ENCODE measurements at regions of chr12 and their contacts with region 1.

Region 1: DNA sequence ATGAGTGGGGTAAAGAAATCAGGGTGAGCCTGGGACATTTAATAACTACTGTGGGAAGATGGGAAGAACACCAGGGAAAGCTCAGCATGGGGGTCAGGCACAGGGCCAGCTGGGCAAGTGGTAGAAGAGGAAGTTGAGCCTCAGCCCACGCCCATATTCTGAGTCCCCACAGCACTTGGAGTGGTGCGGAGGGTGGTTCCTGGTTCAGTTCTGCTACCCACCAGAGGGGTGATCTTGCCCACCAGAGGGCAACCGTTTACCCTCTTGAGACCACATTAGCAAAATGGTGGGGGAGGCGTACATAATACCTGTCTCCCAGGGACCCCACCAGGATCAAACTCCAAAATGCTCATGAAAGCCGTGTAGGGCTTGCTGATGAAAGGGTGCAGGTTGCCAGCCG is 16.8 kb upstream of the ANKRD33 start:
- DNase-seq: no peak
- H3K4me3 ChIP-seq: no peak overlapping the region
- H3K27ac ChIP-seq: no peak overlapping the region
- H3K4me1 ChIP-seq: peaks cover 4 to 30% (median 20%) of the 10 kb centered on the region in 4 experiments
- H3K27me3 ChIP-seq: peaks cover 0 to 29% (median 24%) of the 10 kb centered on the region in 4 experiments; a peak in 6 of 7 replicates
- CTCF ChIP-seq: peak in 2 of 3 experiments; percentile 6 to 31; a peak in 3 of 4 replicates
- EP300 ChIP-seq: no peak
- POLR2A ChIP-seq: no peak
- RAD21 ChIP-seq: peak in 1 of 2 experiments; percentile 9; a peak in 1 of 4 replicates

Region 2: DNA sequence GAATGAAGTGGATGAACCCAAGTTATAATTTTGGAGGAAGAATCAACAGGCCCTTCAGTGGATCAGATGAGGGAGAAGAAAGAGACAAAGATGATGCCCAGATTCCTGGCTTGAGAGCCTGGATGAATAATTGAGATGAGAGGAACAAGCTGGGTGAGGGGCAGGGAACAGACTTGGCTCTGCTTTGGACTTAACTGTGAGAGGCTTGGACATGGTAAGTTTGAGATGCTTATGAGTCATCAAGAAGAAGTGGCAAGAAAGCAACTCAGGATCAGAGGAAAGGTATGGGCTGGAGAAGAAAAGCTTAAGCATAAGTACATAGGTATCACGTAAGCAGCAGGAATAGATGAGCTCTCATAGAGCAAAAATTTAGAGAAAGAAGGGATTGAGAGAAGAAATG is 77.9 kb before region 1 on chr12:
- CTCF ChIA-PET with region 1: interaction called, 14 read pairs
- POLR2A ChIA-PET with region 1: no interaction called
- DNase-seq: no peak
- H3K4me3 ChIP-seq: no peak overlapping the region
- H3K27ac ChIP-seq: no peak overlapping the region
- H3K4me1 ChIP-seq: no peaks in the 10 kb centered on the region
- H3K27me3 ChIP-seq: no peaks in the 10 kb centered on the region
- CTCF ChIP-seq: no peak
- EP300 ChIP-seq: no peak
- POLR2A ChIP-seq: no peak
- RAD21 ChIP-seq: no peak

Region 3: DNA sequence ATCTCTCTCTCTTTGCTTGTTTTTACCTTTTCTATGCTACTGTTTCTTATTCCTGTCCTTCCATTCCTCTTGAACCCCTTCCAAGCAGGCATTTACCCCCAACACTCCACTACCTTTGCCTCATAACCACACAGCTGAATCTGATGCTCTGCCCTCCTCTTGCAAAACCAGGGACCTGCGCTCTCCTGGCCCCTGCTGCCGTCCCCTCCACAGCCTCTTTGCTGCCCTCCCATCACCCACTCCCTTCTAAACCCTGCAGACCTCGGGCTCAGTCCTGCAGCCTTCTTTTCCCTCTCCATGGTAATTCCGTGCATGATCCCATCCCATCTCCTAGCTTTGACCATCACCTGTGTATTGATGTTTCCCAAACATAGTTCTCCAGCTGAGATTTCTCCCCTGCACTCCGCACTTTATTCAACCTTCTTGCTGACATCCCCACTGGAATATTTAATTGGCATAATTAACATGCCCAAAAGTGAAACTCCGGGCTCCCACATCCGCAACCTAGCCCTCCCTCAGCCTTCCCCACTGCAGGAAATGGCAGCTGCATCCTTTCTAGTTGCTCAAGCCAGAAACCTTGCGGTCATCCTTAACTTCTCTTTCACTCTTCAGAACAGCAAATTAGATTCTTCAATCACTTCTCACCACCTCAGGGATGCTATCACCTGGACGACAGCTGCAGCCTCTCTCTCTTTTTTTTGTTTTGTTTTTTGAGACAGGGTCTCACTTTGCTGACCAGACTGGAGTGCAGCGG is 38.6 kb before region 1 on chr12:
- CTCF ChIA-PET with region 1: interaction called, 109 read pairs
- POLR2A ChIA-PET with region 1: interaction called, 3 read pairs
- DNase-seq: no peak
- H3K4me3 ChIP-seq: no peak overlapping the region
- H3K27ac ChIP-seq: no peak overlapping the region
- H3K4me1 ChIP-seq: peaks cover 19 to 58% (median 36%) of the 10 kb centered on the region in 4 experiments
- H3K27me3 ChIP-seq: peaks cover 0 to 3% (median 0%) of the 10 kb centered on the region in 4 experiments; a peak in 1 of 7 replicates
- CTCF ChIP-seq: no peak
- EP300 ChIP-seq: no peak
- POLR2A ChIP-seq: no peak
- RAD21 ChIP-seq: no peak

Region 4: GRCh38 chr12:51898937-51899336 is 27.8 kb after region 1 on chr12:
- CTCF ChIA-PET with region 1: interaction called, 12 read pairs
- POLR2A ChIA-PET with region 1: interaction called, 4 read pairs
- DNase-seq: no peak
- H3K4me3 ChIP-seq: no peak overlapping the region
- H3K27ac ChIP-seq: no peak overlapping the region
- H3K4me1 ChIP-seq: no peaks in the 10 kb centered on the region
- H3K27me3 ChIP-seq: no peaks in the 10 kb centered on the region
- CTCF ChIP-seq: no peak
- EP300 ChIP-seq: no peak
- POLR2A ChIP-seq: no peak
- RAD21 ChIP-seq: no peak

Measured in H1 (cell line).